Heart right ventricle (tissue), 16 donors: ENCODE measurements at regions of chr4 and their contacts with region 1.

Region 1: DNA sequence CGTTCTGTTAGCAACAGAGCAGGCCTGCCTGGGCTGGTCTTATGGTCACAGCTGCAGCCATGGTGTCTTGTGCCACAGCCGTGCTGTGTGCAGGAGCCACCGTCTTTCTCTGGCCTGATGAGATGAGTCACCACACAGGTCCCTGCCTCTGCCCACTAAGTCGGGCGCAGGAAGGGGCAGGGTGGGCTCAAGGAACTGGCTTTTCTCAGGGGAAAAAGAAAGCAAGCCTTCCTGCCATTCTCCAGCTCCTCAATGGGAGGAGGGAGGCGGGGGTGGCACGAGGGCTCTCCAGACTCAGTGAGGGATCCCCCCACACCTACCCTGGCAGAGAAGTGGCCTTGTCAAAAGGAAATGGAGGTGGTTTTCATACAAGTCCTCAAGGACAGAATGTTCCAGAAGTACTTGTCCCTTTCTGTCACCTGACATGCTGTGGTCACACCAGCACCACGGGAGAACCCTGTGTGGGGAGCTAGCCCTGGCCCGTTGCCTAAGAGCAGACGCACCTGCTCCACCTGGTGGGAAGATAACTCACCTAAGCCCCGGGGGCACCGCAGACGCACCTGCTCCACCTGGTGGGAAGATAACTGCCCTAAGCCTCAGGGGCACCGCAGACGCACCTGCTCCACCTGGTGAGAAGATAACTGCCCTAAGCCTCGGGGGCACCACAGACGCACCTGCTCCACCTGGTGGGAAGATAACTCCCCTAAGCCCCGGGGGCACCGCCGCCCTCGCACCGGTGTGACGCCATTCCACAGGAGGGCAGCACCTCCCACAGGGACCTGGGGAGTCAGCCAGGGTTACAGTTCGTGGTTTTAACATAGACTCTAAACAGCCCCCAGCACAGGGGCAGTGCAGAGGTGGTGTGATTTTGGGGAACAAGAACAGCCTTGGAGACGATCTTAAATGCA is 18.5 kb downstream of the UVSSA start:
- DNase-seq: no peak
- ATAC-seq: no peak
- H3K4me3 ChIP-seq: no peak overlapping the region
- H3K27ac ChIP-seq: no peak overlapping the region
- H3K4me1 ChIP-seq: no peaks in the 10 kb centered on the region
- H3K27me3 ChIP-seq: no peaks in the 10 kb centered on the region
- CTCF ChIP-seq: no peak

Region 2: DNA sequence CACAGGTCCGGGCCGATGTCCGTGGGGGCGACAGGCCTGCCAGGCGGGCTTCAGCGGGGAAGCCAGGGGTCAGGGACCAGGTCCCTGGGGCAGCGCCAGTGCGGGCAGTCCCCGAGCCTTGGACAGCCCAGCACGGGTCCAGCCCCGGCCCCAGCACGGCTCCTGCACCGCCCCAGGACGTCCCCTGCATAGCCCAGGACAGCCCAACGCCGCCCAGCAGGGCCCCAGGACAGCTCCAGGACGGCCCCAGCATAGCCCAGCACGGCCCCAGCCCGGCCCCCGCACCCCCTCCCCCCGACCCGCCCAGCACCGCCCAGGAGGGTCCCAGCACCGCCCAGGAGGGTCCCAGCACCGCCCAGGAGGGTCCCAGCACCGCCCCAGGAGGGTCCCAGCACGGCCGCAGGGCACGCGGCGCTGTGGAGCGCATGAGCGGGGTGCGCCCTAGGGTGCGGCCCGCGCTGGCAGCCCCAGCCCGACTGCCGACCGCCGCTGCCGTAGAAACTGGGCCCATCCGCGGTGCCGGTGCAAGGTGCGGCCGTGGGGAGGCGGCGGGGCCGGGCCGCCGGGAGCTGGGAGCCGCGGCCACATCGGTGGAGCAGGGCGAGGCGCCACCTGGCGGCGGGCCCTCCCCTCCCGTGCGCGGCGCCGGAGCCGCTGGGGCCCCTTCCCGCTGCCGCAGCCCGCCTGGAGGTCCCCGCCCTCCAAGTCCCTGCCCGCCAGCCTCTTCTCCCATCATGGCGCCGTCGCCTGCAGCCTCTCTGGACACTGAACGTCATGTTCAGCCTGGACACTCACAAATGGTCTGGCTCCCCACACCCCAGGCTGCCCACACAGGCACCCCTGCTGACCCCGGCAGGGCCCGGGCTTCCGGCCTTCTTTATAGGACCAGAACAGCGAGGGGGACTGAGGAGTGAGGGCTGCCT is 147.5 kb after region 1 on chr4:
- intact Hi-C with region 1: loop called in 1 of 10 experiments (anchors 10 kb)
- DNase-seq: peak in 1 of 2 donors; percentile 49
- ATAC-seq: peak; percentile 43 to 79 (median 76)
- H3K4me3 ChIP-seq: peak overlapping the region in 8 of 10 donors; percentile 6 to 34 (median 21)
- H3K27ac ChIP-seq: peak overlapping the region in 1 of 10 donors; percentile 18
- H3K4me1 ChIP-seq: peaks cover 0 to 8% (median 0%) of the 10 kb centered on the region in 9 donors
- H3K27me3 ChIP-seq: peaks cover 5 to 72% (median 52%) of the 10 kb centered on the region in 7 donors
- CTCF ChIP-seq: peak; percentile 48 to 74 (median 64)

Region 3: DNA sequence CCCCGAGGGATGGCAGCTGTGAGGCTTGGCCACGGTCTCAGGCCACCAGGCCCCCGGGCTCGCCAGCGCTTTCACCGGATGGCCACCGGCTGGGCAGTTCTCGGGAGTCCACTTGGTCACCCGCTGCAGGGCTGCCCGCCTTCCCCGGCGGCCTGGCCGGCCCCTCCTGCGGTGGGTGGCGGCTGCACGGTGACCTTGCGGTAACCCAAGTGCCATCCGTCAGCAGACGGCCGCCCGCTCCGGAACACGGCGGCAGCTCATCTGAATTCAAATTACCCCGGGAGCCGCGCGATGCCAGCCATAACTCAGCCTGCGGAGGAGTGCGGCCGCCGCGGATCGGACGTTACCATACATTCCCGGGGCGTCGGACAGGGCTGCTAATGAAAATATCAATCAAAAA is 257.9 kb after region 1 on chr4:
- intact Hi-C with region 1: loop called in 1 of 10 experiments (anchors 5 kb)
- DNase-seq: no peak
- ATAC-seq: peak in 1 of 8 donors; percentile 10
- H3K4me3 ChIP-seq: no peak overlapping the region
- H3K27ac ChIP-seq: no peak overlapping the region
- H3K4me1 ChIP-seq: no peaks in the 10 kb centered on the region
- H3K27me3 ChIP-seq: no peaks in the 10 kb centered on the region
- CTCF ChIP-seq: no peak